ENCODE measurements at regions of chr1 and their contacts with region 1.

Region 1: DNA sequence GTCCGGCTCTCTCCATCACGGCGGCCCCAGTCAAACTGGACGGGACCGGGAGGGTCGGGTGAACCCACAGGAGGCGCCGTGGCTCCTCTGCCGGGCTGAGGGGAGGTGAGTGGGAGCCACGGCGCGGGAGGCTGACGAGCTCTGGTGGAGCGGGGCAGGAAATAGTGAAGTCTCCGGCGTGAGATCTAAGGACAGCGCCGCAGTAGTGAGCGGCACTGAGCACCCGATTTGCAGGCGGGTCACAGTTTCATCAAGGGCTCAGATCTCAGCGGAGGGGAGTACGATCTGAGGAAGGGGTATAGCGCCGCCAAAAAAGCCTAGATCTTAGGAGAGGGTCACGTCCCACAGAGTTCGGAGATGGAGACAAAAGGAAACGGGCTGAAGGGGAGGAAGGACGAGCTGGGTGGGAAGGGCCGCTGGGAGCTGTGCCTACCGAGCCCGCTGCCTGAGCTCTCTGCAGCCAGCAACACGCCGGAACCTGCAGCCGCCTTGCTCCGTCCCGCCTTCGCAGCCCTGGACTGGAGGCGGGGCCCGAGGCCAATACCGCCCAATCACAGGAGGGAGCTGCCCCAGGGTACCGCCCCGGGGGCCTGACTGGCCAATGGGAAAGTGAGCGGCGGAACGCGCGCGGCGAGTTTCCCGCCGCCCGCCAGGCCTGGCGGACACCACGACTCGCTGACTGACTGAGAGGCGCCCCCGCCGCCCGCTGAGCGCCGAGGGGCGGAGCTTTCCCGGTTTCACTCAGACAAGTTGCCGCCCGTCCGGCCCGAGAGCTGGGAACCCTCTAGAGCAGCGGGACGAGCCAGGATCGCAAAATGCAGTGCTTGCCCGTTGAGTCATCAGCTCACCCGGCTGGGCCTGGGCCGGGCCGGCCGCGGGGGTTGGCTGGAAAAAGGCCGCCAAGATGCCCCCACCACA is 1.9 kb downstream of the SFN start:
- DNase-seq: peak; percentile 99
- H3K4me3 ChIP-seq: peak overlapping the region; percentile 61
- H3K27ac ChIP-seq: peak overlapping the region; percentile 79
- H3K4me1 ChIP-seq: no peaks in the 10 kb centered on the region
- H3K27me3 ChIP-seq: no peaks in the 10 kb centered on the region
- CTCF ChIP-seq: 0 out of 2 replicates have a peak, but pooled peaks have one; percentile 22

Region 2: DNA sequence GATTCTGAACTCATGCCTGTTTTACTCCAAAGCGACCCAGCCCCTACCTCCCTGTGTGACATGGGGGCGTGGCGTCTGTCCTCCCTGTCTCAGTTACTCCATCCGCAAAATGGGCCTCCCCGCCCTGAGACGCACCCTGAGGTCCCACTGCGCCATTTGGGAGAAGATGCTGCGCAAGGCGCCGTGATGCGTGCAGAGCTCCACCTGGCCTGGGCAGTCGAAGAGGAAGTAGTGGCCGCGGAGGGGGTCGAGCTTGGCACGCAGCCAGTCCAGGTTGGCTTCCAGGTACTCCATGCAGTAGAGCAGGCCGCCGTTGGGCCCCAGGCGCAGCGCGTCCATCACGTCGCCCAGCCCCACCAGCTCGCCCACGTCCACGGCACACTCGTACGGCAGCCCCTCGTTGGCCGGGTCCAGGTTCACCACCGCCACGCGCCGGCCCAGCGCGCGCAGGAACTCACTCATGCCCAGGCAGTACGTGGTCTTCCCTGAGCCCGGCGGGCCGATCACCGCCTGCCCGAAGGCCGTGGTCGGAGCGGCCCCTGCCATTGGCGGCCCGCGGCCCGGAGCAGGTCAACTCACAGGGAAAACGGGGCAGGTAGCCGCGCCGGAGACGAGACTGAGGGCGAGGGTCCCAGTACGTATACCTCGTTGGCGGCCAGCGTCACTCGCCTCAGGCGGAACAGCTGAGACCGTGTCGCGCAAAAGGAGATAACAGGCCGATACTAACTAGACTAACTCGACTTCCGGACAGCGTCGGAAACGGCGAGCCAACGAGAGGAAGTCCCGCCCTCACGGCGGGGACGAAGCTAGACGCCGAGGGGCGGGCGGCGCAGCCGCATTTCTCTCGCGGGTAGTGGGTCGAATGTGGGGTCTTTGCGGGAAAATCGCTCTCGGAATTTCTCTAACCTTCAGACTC is 24.9 kb after region 1 on chr1 and contains the start of gene GPN2:
- CTCF ChIA-PET with region 1: interaction called, 6 read pairs
- POLR2A ChIA-PET with region 1: interaction called, 16 read pairs
- intact Hi-C with region 1: no loop called
- DNase-seq: peak; percentile 88
- H3K4me3 ChIP-seq: peak within 1 kb of the TSS; percentile 70
- H3K27ac ChIP-seq: peak within 1 kb of the TSS; percentile 84
- H3K4me1 ChIP-seq: peaks cover 9% of the 10 kb centered on the region
- H3K27me3 ChIP-seq: no peaks in the 10 kb centered on the region
- CTCF ChIP-seq: no peak
- total RNA-seq, gene GPN2: 40.8 and 41.4 TPM in 2 replicates

Region 3: DNA sequence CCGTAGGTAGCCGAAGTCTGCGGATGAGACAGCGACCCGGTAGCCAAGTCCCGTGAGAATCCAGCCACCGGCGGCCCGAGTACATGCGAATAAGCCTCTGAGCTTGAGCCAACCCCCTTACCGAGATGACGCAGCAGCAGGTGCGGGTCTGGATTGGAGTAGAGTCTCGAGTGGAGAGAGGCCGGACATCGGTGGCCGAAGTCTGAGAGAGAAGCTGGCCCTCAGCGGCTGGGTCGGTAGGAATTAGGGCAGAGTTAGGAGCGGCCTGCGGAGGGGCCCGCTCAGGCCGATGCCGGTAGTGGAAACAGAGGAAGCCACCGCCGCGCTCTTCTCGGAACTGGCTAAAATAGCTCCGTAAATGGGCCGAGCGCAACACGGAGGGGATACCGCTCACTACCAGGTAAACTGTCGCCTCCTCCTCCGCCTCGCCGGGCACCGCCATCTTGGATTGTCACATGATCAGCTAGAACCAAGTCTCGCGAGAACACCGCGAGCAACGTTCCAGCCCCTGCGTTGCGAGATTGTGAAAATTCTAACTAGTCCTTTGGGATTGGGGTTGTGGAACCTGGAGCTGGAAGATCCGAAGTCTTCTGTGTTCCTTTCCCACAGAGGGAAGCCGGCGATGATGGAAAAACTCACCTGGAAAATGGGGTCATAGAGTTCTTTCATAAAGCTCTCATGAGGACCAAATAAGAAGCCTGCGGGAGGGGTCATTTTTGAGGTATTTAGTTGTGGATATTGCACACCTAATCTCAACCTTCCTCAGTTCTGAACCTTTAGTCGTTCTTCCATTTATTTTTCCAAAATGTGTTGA is 35.3 kb after region 1 on chr1 and contains the start of gene GPATCH3:
- CTCF ChIA-PET with region 1: no interaction called
- POLR2A ChIA-PET with region 1: interaction called, 12 read pairs
- intact Hi-C with region 1: no loop called
- DNase-seq: peak; percentile 95
- H3K4me3 ChIP-seq: peak within 1 kb of the TSS; percentile 78
- H3K27ac ChIP-seq: peak within 1 kb of the TSS; percentile 73
- H3K4me1 ChIP-seq: peaks cover 7% of the 10 kb centered on the region
- H3K27me3 ChIP-seq: no peaks in the 10 kb centered on the region
- CTCF ChIP-seq: no peak
- total RNA-seq, gene GPATCH3: 17.5 and 19.5 TPM in 2 replicates